CD4-positive, alpha-beta T cell (primary cell): ENCODE measurements at regions of chr5 and their contacts with region 1.

Region 1: GRCh38 chr5:10761166-10761932 is at the start of gene DAP:
- DNase-seq: peak; percentile 76 to 98 (median 90)
- ATAC-seq: peak; percentile 85
- H3K4me3 ChIP-seq: peak within 1 kb of the TSS; percentile 69
- H3K4me3 Mint-ChIP-seq: peak within 1 kb of the TSS; percentile 88
- H3K27ac ChIP-seq: peak within 1 kb of the TSS; percentile 79 to 84
- H3K27ac Mint-ChIP-seq: peak within 1 kb of the TSS; percentile 76
- H3K4me1 ChIP-seq: peaks cover 38% of the 10 kb centered on the region
- H3K4me1 Mint-ChIP-seq: peaks cover 56% of the 10 kb centered on the region
- H3K27me3 ChIP-seq: no peaks in the 10 kb centered on the region
- H3K27me3 Mint-ChIP-seq: peaks cover 6% of the 10 kb centered on the region
- CTCF ChIP-seq: no peak
- total RNA-seq, gene DAP: 33.6 to 35.2 TPM

Region 2: DNA sequence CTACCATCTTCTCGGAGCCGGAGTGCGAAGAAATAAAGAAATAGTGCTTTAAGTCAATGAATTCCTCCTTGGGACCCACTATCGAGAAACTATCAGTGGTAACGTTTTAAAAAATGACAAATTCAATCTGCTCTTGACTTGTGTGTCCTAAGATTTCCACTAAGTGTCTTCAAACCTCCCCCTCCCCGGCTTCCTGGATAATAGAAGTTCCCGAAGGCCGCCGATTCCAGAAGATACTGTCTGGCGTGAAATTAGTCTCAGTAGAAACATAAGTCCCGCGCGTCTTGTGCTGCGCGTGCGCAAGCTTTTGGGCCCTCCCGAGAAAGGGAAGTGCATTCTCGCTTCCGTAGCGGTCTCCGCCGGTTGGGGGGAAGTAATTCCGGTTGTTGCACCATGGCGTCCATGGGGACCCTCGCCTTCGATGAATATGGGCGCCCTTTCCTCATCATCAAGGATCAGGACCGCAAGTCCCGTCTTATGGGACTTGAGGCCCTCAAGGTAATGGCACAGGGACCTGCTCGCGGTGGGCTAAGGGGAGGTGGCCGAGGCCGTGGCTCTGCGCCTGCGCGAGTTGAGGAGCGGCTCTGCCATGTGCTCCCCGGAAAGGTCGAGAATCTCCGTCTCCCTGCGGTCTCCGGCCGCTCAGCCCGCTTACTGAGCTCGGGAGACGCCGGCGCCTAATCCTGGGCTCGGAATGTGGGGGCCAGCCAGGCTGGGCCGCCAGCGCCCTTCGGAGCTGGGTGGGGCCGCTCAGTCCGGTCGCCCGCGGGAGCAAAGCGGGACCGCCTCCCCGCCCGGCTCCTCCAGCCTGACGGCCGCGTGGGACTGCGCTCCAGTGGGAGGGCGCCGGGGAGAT is 511.2 kb before region 1 on chr5 and contains the start of gene CCT5:
- CTCF ChIA-PET with region 1: no interaction called
- POLR2A ChIA-PET with region 1: interaction called, 12 read pairs
- intact Hi-C with region 1: loop called in 1 of 2 experiments (anchors 2 kb)
- DNase-seq: peak; percentile 76 to 98 (median 88)
- ATAC-seq: peak; percentile 81
- H3K4me3 ChIP-seq: peak within 1 kb of the TSS; percentile 95
- H3K4me3 Mint-ChIP-seq: peak within 1 kb of the TSS; percentile 98
- H3K27ac ChIP-seq: peak within 1 kb of the TSS; percentile 84 to 100
- H3K27ac Mint-ChIP-seq: peak within 1 kb of the TSS; percentile 99
- H3K4me1 ChIP-seq: peaks cover 43% of the 10 kb centered on the region
- H3K4me1 Mint-ChIP-seq: peaks cover 60% of the 10 kb centered on the region
- H3K27me3 ChIP-seq: no peaks in the 10 kb centered on the region
- H3K27me3 Mint-ChIP-seq: no peaks in the 10 kb centered on the region
- CTCF ChIP-seq: no peak
- total RNA-seq, gene CCT5: 27.4 to 32.0 TPM

Region 3: DNA sequence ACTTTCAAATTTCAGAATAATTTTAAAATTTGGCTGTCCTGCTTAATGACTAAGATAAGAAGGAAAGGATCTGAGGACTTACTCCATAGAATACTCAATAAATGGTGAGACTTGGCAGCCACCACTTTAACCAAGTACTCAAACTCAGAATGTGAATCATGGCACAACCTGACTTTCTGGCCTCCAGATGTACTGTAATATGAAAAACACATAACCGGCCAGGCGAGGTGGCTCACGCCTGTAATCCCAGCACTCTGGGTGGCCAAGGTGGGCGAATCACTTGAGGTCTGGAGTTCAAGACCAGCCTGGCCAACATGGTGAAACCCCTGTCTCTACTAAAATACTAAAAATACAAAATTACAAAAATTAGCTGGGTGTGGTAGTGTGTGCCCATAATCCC is 417.9 kb before region 1 on chr5:
- CTCF ChIA-PET with region 1: no interaction called
- POLR2A ChIA-PET with region 1: no interaction called
- intact Hi-C with region 1: loop called in 1 of 2 experiments (anchors 2 kb)
- DNase-seq: no peak
- ATAC-seq: no peak
- H3K4me3 ChIP-seq: no peak overlapping the region
- H3K4me3 Mint-ChIP-seq: no peak overlapping the region
- H3K27ac ChIP-seq: no peak overlapping the region
- H3K27ac Mint-ChIP-seq: no peak overlapping the region
- H3K4me1 ChIP-seq: no peaks in the 10 kb centered on the region
- H3K4me1 Mint-ChIP-seq: no peaks in the 10 kb centered on the region
- H3K27me3 ChIP-seq: no peaks in the 10 kb centered on the region
- H3K27me3 Mint-ChIP-seq: no peaks in the 10 kb centered on the region
- CTCF ChIP-seq: no peak

Region 4: DNA sequence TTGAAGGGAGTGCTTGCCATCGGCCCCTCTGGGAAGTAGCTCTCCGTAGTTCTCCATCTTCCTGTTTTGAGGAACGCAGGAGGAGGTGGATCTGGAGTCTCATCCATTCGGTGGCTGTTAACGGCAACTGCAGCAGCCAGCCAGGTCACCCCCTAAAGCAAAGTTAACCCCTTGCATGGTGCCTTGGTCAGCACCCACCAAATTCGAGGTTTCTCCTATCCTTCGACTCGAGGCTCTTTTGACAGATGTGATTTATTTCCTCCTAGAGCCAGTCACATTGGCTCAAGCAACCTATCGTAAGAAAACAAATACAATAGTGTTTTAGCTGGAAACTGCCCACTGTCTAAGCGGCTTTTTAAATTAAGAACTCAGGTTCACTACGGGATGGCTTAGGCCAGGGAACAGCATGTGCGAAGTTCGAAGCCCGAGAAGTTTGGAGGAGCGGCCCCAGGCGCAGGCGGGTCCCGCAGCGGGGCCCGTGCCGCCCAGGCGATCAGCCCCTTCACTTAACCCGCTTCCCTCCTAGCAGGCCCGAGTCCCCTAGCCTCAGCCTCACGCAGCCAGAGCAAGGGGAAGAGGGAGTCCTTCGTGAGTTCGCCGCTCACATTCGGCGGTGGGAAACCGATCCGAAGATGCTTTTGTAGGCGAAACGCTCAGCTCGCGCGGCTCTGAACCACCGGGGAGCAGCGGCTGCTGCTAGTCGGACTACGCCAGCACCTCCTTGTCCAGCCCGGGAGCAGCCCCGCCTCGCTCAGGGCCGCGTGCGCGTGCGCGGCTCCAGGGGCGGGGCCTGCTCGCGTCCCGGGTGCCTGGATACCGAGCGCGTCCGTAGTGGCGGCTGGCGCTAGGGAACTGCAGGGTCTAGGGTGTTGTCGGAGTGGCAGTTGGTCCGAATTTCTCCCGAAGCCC is 320.0 kb before region 1 on chr5 and contains the start of gene ROPN1L:
- CTCF ChIA-PET with region 1: no interaction called
- POLR2A ChIA-PET with region 1: no interaction called
- intact Hi-C with region 1: loop called in 1 of 2 experiments (anchors 5 kb)
- DNase-seq: peak; percentile 56 to 90 (median 75)
- ATAC-seq: peak; percentile 93
- H3K4me3 ChIP-seq: peak within 1 kb of the TSS; percentile 84
- H3K4me3 Mint-ChIP-seq: peak within 1 kb of the TSS; percentile 87
- H3K27ac ChIP-seq: no peak within 1 kb of the TSS
- H3K27ac Mint-ChIP-seq: no peak within 1 kb of the TSS
- H3K4me1 ChIP-seq: peaks cover 53% of the 10 kb centered on the region
- H3K4me1 Mint-ChIP-seq: peaks cover 60% of the 10 kb centered on the region
- H3K27me3 ChIP-seq: no peaks in the 10 kb centered on the region
- H3K27me3 Mint-ChIP-seq: no peaks in the 10 kb centered on the region
- CTCF ChIP-seq: no peak
- total RNA-seq, gene ROPN1L: 0.42 to 0.58 TPM

Region 5: GRCh38 chr5:10552183-10553143 is 208.9 kb before region 1 on chr5:
- CTCF ChIA-PET with region 1: no interaction called
- POLR2A ChIA-PET with region 1: no interaction called
- intact Hi-C with region 1: loop called in 1 of 2 experiments (anchors 5 kb)
- DNase-seq: peak in 1 of 14 experiments; percentile 26
- ATAC-seq: no peak
- H3K4me3 ChIP-seq: no peak overlapping the region
- H3K4me3 Mint-ChIP-seq: no peak overlapping the region
- H3K27ac ChIP-seq: no peak overlapping the region
- H3K27ac Mint-ChIP-seq: no peak overlapping the region
- H3K4me1 ChIP-seq: peaks cover 10% of the 10 kb centered on the region
- H3K4me1 Mint-ChIP-seq: no peaks in the 10 kb centered on the region
- H3K27me3 ChIP-seq: peaks cover 3 to 6% of the 10 kb centered on the region in 2 experiments
- H3K27me3 Mint-ChIP-seq: peaks cover 4% of the 10 kb centered on the region
- CTCF ChIP-seq: no peak